Ovary (tissue), 10 donors: ENCODE measurements at regions of chr5 and their contacts with region 1.

Region 1: DNA sequence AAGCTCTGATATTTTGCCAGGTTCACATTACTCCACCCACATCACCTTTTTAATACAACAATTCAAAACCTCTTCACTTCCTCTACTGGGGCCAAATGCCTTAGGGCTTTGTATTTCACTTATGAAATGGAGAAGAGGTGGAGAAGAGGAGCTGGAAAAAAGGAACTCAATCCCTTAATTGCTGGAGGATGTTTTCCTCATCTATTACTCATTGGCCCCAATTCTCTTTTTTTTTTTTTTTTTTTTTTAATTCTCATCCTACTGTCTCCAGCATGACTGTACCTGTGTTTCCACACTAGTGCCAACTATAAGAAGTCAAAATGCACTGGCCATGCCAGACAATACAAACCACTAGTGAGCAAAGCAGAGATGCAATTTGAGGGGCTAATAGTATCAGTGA is 20.9 kb downstream of the FAM13B start:
- DNase-seq: no peak
- H3K4me3 ChIP-seq: no peak overlapping the region
- H3K27ac ChIP-seq: no peak overlapping the region
- H3K4me1 ChIP-seq: no peaks in the 10 kb centered on the region
- H3K27me3 ChIP-seq: no peaks in the 10 kb centered on the region
- CTCF ChIP-seq: no peak
- EP300 ChIP-seq: no peak
- POLR2A ChIP-seq: no peak

Region 2: GRCh38 chr5:136886608-136887007 is 1125.4 kb before region 1 on chr5:
- intact Hi-C with region 1: loop called in 1 of 4 experiments (anchors 5 kb)
- DNase-seq: no peak
- H3K4me3 ChIP-seq: no peak overlapping the region
- H3K27ac ChIP-seq: no peak overlapping the region
- H3K4me1 ChIP-seq: no peaks in the 10 kb centered on the region
- H3K27me3 ChIP-seq: no peaks in the 10 kb centered on the region
- CTCF ChIP-seq: no peak
- EP300 ChIP-seq: no peak
- POLR2A ChIP-seq: no peak

Region 3: GRCh38 chr5:138083702-138084101 is 71.7 kb after region 1 on chr5 and contains the start of gene WNT8A:
- intact Hi-C with region 1: no loop called
- DNase-seq: no peak
- H3K4me3 ChIP-seq: no peak within 1 kb of the TSS
- H3K27ac ChIP-seq: no peak within 1 kb of the TSS
- H3K4me1 ChIP-seq: no peaks in the 10 kb centered on the region
- H3K27me3 ChIP-seq: no peaks in the 10 kb centered on the region
- CTCF ChIP-seq: no peak
- EP300 ChIP-seq: no peak
- POLR2A ChIP-seq: no peak
- total RNA-seq, gene WNT8A: not detected

Region 4: GRCh38 chr5:138128334-138128733 is 116.3 kb after region 1 on chr5:
- intact Hi-C with region 1: no loop called
- DNase-seq: no peak
- H3K4me3 ChIP-seq: no peak overlapping the region
- H3K27ac ChIP-seq: no peak overlapping the region
- H3K4me1 ChIP-seq: no peaks in the 10 kb centered on the region
- H3K27me3 ChIP-seq: no peaks in the 10 kb centered on the region
- CTCF ChIP-seq: no peak
- EP300 ChIP-seq: no peak
- POLR2A ChIP-seq: no peak